Tibial artery (tissue), 4 donors: ENCODE measurements at regions of chr4 and their contacts with region 1.

Region 1: DNA sequence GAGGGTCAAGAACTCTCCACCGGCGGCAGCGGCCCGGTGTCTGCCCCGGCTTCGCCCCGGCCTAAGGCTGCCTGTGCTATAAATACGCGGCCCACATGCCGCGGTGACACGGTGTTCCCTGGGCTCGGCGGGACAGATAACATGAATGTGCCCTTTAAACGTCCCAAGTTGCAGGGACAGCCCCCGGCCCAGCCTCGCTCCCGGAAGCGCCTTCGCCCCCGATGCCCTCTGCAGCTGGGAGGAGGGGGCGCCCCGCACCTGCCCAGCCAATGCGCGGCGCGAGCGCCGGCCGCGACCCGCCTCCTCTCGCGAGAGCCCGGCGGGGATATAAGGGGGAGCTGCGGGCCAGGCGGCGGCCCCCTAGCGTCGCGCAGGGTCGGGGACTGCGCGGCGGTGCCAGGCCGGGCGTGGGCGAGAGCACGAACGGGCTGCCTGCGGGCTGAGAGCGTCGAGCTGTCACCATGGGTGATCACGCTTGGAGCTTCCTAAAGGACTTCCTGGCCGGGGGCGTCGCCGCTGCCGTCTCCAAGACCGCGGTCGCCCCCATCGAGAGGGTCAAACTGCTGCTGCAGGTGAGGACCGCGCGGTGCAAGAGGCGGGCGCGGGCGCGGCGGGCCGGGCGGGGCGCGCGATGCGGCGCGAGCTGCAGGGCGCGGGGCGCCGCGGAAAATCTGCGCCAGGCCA is at the start of gene SLC25A4:
- DNase-seq: peak; percentile 72 to 91
- H3K4me3 ChIP-seq: peak within 1 kb of the TSS; percentile 72 to 79
- H3K27ac ChIP-seq: peak within 1 kb of the TSS; percentile 86 to 92
- H3K4me1 ChIP-seq: peaks cover 0 to 38% (median 20%) of the 10 kb centered on the region in 4 donors
- H3K27me3 ChIP-seq: no peaks in the 10 kb centered on the region
- CTCF ChIP-seq: peak; percentile 53 to 70

Region 2: DNA sequence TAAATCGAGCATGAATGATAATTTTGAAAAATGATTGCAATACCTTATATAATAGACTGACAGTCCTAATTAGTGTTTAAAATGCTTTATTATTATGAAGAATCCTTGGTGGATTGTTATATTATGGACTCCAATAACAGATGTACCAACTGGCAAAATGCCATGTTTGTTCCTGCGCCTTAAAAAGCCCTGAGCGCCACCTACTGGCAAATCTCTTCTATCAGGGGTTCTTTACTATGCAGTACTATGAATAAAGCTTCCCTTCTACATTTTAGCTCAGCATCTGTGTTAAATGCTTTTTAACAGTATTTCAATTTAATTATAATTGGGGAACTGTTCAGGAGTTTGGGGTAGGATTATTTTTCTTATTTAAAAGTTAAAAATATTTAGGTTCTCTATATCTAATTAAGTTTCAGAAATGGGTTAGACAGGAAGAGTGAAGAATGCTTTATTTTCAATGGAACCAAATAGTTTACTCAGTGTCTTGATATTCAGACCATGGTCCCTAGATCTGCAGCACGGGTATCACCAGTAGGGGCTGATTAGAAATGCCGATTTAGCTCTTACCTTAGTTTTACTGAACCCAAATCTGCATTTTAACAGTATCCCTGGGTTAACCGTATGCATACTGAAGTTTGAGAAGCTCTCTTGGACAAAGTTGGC is 40.7 kb after region 1 on chr4:
- intact Hi-C with region 1: loop called (anchors 5 kb)
- DNase-seq: peak; percentile 87 to 89
- H3K4me3 ChIP-seq: no peak overlapping the region
- H3K27ac ChIP-seq: peak overlapping the region in 1 of 2 donors; percentile 74
- H3K4me1 ChIP-seq: peaks cover 0 to 39% (median 7%) of the 10 kb centered on the region in 4 donors
- H3K27me3 ChIP-seq: no peaks in the 10 kb centered on the region
- CTCF ChIP-seq: peak; percentile 75 to 84